Activated naive CD4-positive, alpha-beta T cell treated with anti-CD3 and anti-CD28 coated beads for 36 hours (primary cell): ENCODE measurements at regions of chr2 and their contacts with region 1.

Region 1: GRCh38 chr2:30336978-30337841 is 105.9 kb downstream of the LBH start:
- DNase-seq: peak; percentile 85
- H3K4me3 Mint-ChIP-seq: peak overlapping the region; percentile 58
- H3K27ac Mint-ChIP-seq: peak overlapping the region; percentile 92
- H3K4me1 Mint-ChIP-seq: peaks cover 77% of the 10 kb centered on the region
- H3K27me3 Mint-ChIP-seq: no peaks in the 10 kb centered on the region

Region 2: GRCh38 chr2:30146438-30147147 is 190.6 kb before region 1 on chr2 and contains the start of gene YPEL5:
- CTCF ChIA-PET with region 1: interaction called, 3 read pairs
- intact Hi-C with region 1: loop called (anchors 1 kb)
- DNase-seq: peak; percentile 99
- H3K4me3 Mint-ChIP-seq: peak within 1 kb of the TSS; percentile 84
- H3K27ac Mint-ChIP-seq: peak within 1 kb of the TSS; percentile 95
- H3K4me1 Mint-ChIP-seq: peaks cover 56% of the 10 kb centered on the region
- H3K27me3 Mint-ChIP-seq: no peaks in the 10 kb centered on the region
- total RNA-seq, gene YPEL5: 28.4 to 33.3 TPM

Region 3: DNA sequence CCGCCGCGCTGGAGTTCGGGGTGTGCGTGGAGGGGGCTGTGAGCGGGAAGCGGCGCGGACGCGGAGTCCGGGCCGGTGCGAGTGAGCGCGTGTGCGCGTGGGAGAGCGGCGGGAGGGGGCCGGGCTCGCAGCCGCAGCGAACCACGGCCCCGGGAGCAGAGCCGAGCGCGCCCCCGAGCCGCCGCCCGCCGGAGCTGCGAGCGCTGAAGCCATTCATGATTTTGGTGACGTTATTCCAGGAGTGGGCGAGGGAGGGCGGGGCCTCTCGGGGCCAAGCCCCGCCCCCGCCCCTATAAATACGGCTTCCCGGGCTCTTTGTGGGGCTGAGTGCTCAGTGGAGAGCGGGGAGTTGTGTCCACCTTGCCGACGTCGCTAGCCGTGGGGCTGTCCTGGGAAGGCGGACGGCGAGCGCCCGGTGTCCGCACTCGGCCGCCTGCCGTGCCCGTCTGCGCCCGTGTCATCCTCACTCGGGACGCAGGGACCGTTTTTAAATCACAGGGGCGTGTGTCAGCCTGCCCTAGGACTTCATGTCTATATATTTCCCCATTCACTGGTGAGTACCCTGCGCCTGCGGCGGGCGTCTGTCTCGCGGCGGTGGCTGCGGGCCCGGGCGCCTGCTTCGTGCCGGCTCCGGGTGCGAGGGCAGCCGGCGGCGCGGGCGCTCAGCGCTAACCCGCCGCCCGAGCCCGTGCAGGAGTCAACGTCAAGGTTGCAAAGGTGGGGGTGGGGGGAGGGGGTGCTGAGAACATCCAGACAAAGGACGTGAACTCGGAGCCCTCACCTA is 105.8 kb before region 1 on chr2 and contains the start of gene LBH:
- CTCF ChIA-PET with region 1: interaction called, 16 read pairs
- intact Hi-C with region 1: loop called (anchors 1 kb)
- DNase-seq: peak; percentile 90
- H3K4me3 Mint-ChIP-seq: peak within 1 kb of the TSS; percentile 83
- H3K27ac Mint-ChIP-seq: peak within 1 kb of the TSS; percentile 74
- H3K4me1 Mint-ChIP-seq: peaks cover 56% of the 10 kb centered on the region
- H3K27me3 Mint-ChIP-seq: peaks cover 3% of the 10 kb centered on the region
- total RNA-seq, gene LBH: 71.4 to 75.3 TPM

Region 4: GRCh38 chr2:30266051-30266621 is 71.1 kb before region 1 on chr2:
- CTCF ChIA-PET with region 1: interaction called, 4 read pairs
- intact Hi-C with region 1: loop called (anchors 2 kb)
- DNase-seq: peak; percentile 73
- H3K4me3 Mint-ChIP-seq: peak overlapping the region; percentile 79
- H3K27ac Mint-ChIP-seq: peak overlapping the region; percentile 89
- H3K4me1 Mint-ChIP-seq: peaks cover 81% of the 10 kb centered on the region
- H3K27me3 Mint-ChIP-seq: no peaks in the 10 kb centered on the region

Region 5: GRCh38 chr2:30366199-30366691 is 29.0 kb after region 1 on chr2:
- CTCF ChIA-PET with region 1: no interaction called
- intact Hi-C with region 1: loop called (anchors 1 kb)
- DNase-seq: peak; percentile 74
- H3K4me3 Mint-ChIP-seq: no peak overlapping the region
- H3K27ac Mint-ChIP-seq: peak overlapping the region; percentile 67
- H3K4me1 Mint-ChIP-seq: peaks cover 43% of the 10 kb centered on the region
- H3K27me3 Mint-ChIP-seq: no peaks in the 10 kb centered on the region

Region 6: DNA sequence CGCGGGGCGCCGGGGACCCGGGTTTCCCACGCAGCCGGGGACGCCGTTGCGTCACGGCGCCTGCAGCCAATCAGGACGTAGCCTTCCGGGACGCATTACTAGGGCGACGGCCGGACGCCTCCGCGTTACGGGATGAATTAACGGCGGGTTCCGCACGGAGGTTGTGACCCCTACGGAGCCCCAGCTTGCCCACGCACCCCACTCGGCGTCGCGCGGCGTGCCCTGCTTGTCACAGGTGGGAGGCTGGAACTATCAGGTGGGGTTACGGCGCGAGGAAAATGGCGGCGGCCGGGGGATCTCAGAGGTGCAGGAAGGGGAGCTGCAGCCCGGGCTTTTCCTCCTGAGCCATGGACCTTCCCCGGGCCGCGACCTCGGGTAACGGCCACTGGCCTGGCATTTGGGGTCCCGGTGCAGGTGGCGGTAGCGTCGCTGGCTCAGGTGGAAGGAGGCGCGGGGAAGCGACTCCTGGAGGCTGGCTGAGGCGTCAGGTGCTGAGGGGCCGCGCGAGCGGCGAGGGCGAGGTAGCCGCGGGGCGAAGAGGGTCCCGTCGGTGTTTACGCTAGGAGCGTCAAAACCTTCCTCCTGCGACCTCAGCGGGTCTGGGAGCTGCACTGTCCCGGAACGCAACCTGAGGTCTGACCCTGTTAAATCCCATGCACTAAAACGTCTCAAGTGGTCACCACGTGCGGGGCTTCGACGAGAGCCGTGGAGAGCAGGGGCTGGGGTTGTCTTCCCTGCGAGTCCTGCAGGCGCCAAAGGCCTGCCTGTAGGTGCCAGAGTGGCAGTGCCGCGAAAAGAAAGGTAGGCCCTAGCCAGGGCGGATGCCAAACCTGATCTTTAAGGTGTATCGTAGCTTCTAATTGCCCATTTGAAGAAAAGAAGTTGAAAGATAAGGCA is 110.2 kb after region 1 on chr2 and contains the start of gene LCLAT1:
- CTCF ChIA-PET with region 1: interaction called, 4 read pairs
- intact Hi-C with region 1: loop called (anchors 1 kb)
- DNase-seq: peak; percentile 86
- H3K4me3 Mint-ChIP-seq: peak within 1 kb of the TSS; percentile 90
- H3K27ac Mint-ChIP-seq: peak within 1 kb of the TSS; percentile 95
- H3K4me1 Mint-ChIP-seq: peaks cover 40% of the 10 kb centered on the region
- H3K27me3 Mint-ChIP-seq: no peaks in the 10 kb centered on the region
- total RNA-seq, gene LCLAT1: 18.8 to 22.8 TPM